ENCODE measurements at regions of chr7 and their contacts with region 1.

Region 1: GRCh38 chr7:139645572-139646523 is 122.4 kb downstream of the CLEC2L start:
- DNase-seq: peak; percentile 91
- ATAC-seq: peak; percentile 77
- H3K4me3 Mint-ChIP-seq: no peak overlapping the region
- H3K27ac Mint-ChIP-seq: no peak overlapping the region
- H3K4me1 Mint-ChIP-seq: peaks cover 30% of the 10 kb centered on the region
- H3K27me3 Mint-ChIP-seq: no peaks in the 10 kb centered on the region
- CTCF ChIP-seq: peak; percentile 92

Region 2: GRCh38 chr7:139505563-139505962 is 140.3 kb before region 1 on chr7:
- CTCF ChIA-PET with region 1: interaction called, 10 read pairs
- POLR2A ChIA-PET with region 1: no interaction called
- DNase-seq: peak; percentile 82
- ATAC-seq: peak; percentile 93
- H3K4me3 Mint-ChIP-seq: no peak overlapping the region
- H3K27ac Mint-ChIP-seq: no peak overlapping the region
- H3K4me1 Mint-ChIP-seq: peaks cover 13% of the 10 kb centered on the region
- H3K27me3 Mint-ChIP-seq: peaks cover 2% of the 10 kb centered on the region; the same call in 1 of the 2 replicates
- CTCF ChIP-seq: peak; percentile 91

Region 3: DNA sequence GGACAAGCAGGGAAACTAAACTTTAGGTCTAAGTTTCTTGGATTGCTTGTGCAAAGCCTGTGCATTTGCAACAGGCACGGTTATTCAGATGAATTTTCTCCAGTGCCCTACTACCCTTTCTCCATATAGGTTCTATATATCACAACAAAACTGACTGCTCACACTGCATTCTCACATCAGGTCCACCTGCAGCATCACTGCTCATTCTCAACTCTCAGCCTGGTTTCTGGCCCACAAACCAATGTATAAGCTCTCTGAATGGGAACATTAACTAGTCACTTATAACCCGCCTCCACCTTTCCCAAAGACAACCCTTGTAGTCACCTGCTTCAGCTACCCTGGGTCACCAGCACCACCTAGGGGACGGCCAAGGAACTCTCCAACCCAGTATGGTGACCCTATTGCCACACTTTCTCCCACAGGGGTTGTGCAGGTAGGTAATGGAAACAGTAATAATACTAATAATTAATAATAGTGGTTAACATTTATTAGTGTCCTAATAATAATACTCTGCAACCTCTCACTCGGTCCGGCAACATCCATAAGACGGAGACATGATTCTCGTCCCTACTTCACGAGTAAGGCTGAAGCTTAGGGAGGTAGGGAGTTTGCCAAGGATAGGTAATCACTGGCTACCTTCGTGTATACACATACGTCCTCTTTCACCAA is 25.0 kb before region 1 on chr7:
- CTCF ChIA-PET with region 1: interaction called, 24 read pairs
- POLR2A ChIA-PET with region 1: no interaction called
- DNase-seq: peak; percentile 84
- ATAC-seq: peak; percentile 97
- H3K4me3 Mint-ChIP-seq: no peak overlapping the region
- H3K27ac Mint-ChIP-seq: no peak overlapping the region; the same call in 1 of the 2 replicates
- H3K4me1 Mint-ChIP-seq: no peaks in the 10 kb centered on the region
- H3K27me3 Mint-ChIP-seq: no peaks in the 10 kb centered on the region
- CTCF ChIP-seq: peak; percentile 67

Region 4: DNA sequence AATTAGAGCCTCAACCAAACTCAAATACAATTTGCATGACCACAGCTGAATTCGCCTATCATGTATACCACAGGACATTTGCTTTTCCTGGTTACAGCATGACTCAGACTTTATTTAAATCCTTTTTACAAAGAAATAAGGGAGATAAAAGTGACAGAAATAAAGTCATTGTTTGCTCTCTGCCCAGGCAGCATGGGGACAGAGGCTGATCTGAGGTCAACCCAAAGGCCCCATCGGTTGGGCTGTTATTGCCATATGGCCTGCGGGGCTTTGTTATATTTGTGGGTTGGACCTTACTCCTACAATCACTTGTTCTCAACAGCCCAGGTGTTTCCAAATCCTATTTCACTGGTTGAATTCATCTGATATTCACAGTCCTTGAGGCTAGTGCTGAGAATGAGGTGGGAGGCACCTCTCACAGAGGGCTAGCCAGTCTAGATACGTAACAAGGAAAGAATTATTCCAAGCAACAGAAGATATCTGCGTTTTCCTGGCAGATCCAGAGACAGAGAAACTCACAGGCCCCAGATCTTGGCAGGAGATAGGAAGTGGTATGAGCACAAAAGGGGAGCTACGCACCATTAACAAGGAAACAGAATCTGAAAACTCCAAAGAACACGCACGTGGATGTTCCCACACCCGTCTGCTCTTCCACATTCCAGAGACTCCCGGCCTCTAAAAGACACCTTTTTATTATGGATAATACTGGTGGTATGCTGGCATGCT is 14.6 kb after region 1 on chr7:
- CTCF ChIA-PET with region 1: interaction called, 15 read pairs
- POLR2A ChIA-PET with region 1: interaction called, 8 read pairs
- DNase-seq: no peak
- ATAC-seq: peak; percentile 31
- H3K4me3 Mint-ChIP-seq: no peak overlapping the region
- H3K27ac Mint-ChIP-seq: peak overlapping the region; percentile 69
- H3K4me1 Mint-ChIP-seq: peaks cover 36% of the 10 kb centered on the region
- H3K27me3 Mint-ChIP-seq: no peaks in the 10 kb centered on the region
- CTCF ChIP-seq: no peak

Region 5: DNA sequence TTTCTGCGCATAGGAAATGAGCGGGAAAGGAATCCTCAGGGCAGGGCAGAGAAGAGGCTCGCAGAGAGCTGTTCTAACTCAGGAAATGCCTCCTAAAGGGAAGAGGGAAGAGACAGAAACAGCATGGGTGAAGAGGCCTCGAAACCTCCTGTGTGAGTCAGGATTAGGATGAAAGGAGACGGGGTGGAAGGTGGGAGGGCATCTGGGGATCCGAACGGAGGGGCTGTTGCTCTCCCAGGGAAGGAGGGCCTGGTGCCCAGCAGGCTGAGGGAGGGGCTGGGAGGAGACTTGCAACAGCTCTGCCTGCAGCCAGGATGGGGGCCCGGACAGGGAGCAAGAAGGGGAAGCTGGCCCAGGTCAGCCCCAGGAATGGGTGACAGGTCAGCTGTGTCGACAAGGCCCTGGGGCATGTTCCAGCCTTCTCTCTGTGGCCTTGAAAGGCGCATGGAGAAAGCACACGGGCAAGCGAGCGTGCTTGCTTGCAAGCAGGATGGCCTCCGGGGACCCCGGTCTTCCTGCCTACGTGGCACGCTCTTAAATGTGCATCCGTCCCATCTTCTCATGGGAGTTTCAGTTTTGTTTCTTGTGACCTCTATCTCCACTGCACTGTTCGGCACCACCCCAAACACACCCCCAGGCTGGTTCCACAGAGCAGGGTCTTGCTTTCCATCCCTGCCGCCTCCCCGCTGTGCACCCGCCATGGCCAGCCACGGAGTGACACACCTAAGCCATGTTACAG is 68.5 kb after region 1 on chr7:
- CTCF ChIA-PET with region 1: interaction called, 14 read pairs
- POLR2A ChIA-PET with region 1: no interaction called
- DNase-seq: no peak
- ATAC-seq: peak; percentile 55; the same call in 1 of the 2 replicates
- H3K4me3 Mint-ChIP-seq: no peak overlapping the region
- H3K27ac Mint-ChIP-seq: peak overlapping the region; percentile 95
- H3K4me1 Mint-ChIP-seq: peaks cover 39% of the 10 kb centered on the region
- H3K27me3 Mint-ChIP-seq: no peaks in the 10 kb centered on the region
- CTCF ChIP-seq: no peak

Region 6: GRCh38 chr7:139777948-139778841 is 132.3 kb after region 1 on chr7 and contains the start of gene HIPK2:
- CTCF ChIA-PET with region 1: interaction called, 11 read pairs
- POLR2A ChIA-PET with region 1: no interaction called
- DNase-seq: peak; percentile 74
- ATAC-seq: peak; percentile 78
- H3K4me3 Mint-ChIP-seq: peak within 1 kb of the TSS; percentile 95
- H3K27ac Mint-ChIP-seq: no peak within 1 kb of the TSS
- H3K4me1 Mint-ChIP-seq: peaks cover 20% of the 10 kb centered on the region
- H3K27me3 Mint-ChIP-seq: peaks cover 44% of the 10 kb centered on the region
- CTCF ChIP-seq: no peak
- total RNA-seq, gene HIPK2: 20.8 to 25.3 TPM (median 21.3 TPM) in 3 replicates